Activated naive CD4-positive, alpha-beta T cell treated with anti-CD3 and anti-CD28 coated beads for 36 hours (primary cell): ENCODE measurements at regions of chr2 and their contacts with region 1.

Region 1: DNA sequence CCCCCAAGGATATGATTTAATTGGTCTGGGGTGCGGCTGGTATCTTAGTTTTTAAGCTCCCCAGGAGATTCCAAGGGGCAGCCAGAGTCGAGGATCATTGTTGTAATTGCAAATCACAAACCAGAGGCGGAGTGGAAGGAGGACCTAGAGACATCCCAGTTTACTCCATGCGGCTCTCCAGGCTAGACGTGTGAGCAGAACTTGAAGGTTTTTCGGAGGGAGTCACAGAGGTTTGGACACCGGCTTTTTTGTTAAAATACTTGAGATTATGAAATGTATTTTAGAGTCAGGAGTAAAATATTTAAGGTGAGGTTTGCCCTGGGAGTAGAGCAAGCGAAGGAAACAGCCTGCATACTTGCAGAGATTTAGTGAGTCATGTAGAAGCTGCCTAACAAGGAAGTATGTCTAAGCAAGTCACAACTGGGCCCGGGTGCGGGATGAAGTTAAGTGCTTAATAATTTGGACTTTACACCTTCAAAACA is 39.5 kb downstream of the TGOLN2 start:
- DNase-seq: no peak
- H3K4me3 Mint-ChIP-seq: no peak overlapping the region
- H3K27ac Mint-ChIP-seq: no peak overlapping the region
- H3K4me1 Mint-ChIP-seq: peaks cover 17% of the 10 kb centered on the region
- H3K27me3 Mint-ChIP-seq: no peaks in the 10 kb centered on the region

Region 2: DNA sequence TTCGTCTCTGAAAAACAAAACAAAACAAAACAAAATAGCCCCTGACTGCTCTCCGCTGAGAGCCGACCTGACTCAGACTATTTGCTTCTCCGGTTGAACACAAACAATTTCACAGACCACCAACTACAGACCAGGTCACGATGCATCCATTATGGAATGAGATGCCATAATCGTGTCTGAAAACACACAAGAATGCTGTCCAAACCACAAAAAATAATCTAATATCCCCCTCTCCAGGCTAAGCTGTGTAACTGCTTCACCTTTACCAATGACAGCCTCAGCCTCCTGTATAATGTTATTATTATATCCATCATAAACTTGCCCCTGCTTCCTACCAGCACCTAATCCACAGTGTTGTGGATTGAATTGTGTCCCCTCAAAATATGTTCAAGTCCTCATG is 657.2 kb before region 1 on chr2:
- CTCF ChIA-PET with region 1: no interaction called
- intact Hi-C with region 1: loop called (anchors 10 kb)
- DNase-seq: no peak
- H3K4me3 Mint-ChIP-seq: no peak overlapping the region
- H3K27ac Mint-ChIP-seq: no peak overlapping the region
- H3K4me1 Mint-ChIP-seq: peaks cover 12% of the 10 kb centered on the region
- H3K27me3 Mint-ChIP-seq: no peaks in the 10 kb centered on the region

Region 3: GRCh38 chr2:85017411-85018048 is 270.8 kb before region 1 on chr2:
- CTCF ChIA-PET with region 1: interaction called, 5 read pairs
- intact Hi-C with region 1: loop called (anchors 1 kb)
- DNase-seq: no peak
- H3K4me3 Mint-ChIP-seq: no peak overlapping the region
- H3K27ac Mint-ChIP-seq: peak overlapping the region; percentile 66
- H3K4me1 Mint-ChIP-seq: peaks cover 72% of the 10 kb centered on the region
- H3K27me3 Mint-ChIP-seq: no peaks in the 10 kb centered on the region

Region 4: DNA sequence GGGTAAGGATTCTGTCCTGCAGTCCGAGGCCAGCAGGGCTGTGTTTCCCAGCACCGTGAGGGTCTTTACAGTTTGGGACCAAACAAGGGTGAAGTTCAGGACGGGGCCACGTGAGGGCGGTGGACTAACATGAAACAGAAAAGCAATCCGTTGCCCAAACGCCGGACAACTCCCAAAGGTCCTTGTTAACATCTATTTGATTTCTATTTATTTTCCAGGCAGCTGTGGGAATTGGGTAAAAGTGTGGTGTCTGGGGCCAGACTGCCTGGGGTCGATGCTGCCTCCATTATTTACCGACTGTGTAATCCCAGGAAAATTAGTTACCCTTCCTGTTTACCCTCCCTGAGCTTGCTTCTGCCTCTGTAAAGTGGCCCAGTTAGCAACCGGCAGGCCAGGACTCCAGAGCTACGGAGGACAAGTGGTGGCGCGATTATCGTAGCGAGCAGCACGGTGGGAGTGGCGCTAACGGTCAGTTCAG is 221.4 kb before region 1 on chr2:
- CTCF ChIA-PET with region 1: interaction called, 32 read pairs
- intact Hi-C with region 1: loop called (anchors 1 kb)
- DNase-seq: peak; percentile 65
- H3K4me3 Mint-ChIP-seq: peak overlapping the region; percentile 24
- H3K27ac Mint-ChIP-seq: no peak overlapping the region
- H3K4me1 Mint-ChIP-seq: peaks cover 4% of the 10 kb centered on the region
- H3K27me3 Mint-ChIP-seq: peaks cover 14% of the 10 kb centered on the region

Region 5: DNA sequence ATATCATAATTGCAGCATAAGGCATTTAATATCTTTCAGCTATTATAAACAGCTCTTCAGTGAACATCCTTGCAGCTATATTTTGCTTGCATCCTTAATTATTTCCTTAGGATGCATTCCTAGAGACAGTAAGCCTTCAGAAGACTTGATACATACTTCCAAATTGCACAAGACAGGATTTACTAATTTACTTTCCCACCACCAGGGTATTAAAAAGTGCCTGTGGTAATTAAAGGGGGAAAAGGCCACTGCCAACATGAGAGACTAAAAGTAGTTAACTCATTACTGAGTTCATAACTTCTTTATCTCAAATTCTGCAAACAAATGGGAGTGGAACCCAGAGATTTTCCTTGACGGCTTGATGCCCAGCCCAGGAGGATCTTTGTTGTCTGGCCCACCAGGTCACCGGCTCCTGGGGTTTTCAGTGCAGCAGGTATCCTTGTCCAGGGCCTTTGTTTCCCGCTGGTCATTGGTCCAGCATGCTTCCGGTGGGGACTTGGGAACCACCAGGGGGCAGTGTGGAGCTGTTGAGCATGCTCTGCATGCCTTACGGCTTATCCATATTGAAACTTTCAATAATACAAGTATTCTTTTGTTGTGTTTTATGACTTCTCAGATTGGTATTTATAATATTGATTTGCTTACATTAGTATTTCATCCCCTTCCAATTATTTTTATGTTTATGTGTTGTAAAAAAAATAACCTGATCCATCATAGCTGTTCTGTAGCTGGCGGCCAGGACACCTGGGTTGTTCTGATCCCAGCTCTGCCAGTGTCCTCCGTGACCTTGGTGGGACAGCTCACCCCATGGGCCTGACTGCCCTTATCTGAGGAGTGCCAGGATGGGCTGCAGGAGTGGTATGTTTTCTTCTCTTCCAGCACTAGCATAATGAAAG is 21.9 kb before region 1 on chr2:
- CTCF ChIA-PET with region 1: interaction called, 29 read pairs
- intact Hi-C with region 1: loop called (anchors 1 kb)
- DNase-seq: peak; percentile 80
- H3K4me3 Mint-ChIP-seq: no peak overlapping the region
- H3K27ac Mint-ChIP-seq: no peak overlapping the region
- H3K4me1 Mint-ChIP-seq: no peaks in the 10 kb centered on the region
- H3K27me3 Mint-ChIP-seq: no peaks in the 10 kb centered on the region

Region 6: DNA sequence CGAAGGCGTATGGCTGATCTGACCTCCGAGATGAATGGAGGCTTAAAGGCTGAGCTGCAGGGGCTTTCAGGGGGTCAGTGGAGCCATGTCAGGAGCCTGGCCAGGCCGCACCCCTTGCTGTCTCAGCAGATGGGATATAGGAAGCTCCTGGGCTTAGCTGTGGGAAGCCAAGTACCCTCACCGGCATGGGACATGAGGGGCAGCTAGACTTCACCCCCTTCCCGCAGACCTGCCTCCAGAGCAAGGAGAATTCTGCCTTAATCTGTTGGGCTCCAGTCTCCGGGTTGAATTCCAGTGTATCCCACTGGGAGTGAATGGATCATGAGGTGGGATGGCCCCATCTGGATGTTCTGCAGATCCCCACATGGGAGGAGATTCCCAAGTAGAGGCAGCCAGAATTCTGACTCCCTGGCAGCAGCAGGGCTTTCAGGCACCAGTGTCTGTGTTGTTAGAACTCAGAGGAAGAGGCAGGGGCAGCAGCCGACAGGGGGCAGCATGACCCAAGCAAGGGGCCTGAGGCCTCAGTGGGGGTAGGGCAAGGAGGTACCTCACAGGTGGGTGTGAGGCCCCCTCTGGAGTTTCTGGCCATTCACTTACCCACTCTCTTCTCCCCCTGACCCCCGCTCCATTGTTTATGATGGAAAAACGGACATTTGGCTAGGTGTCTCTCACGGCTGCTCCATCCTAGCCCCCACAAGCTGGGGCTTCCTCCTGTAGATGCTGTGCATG is 102.8 kb after region 1 on chr2:
- CTCF ChIA-PET with region 1: no interaction called
- intact Hi-C with region 1: no loop called
- DNase-seq: peak; percentile 79
- H3K4me3 Mint-ChIP-seq: no peak overlapping the region
- H3K27ac Mint-ChIP-seq: no peak overlapping the region
- H3K4me1 Mint-ChIP-seq: peaks cover 5% of the 10 kb centered on the region
- H3K27me3 Mint-ChIP-seq: no peaks in the 10 kb centered on the region